Activated CD8-positive, alpha-beta T cell treated with anti-CD3 and anti-CD28 coated beads for 36 hours (primary cell): ENCODE measurements at regions of chr2 and their contacts with region 1.

Region 1: GRCh38 chr2:117470311-117471095 is 344.0 kb upstream of the DDX18 start:
- DNase-seq: peak; percentile 52
- ATAC-seq: no peak
- H3K4me3 Mint-ChIP-seq: no peak overlapping the region
- H3K27ac Mint-ChIP-seq: no peak overlapping the region
- H3K4me1 Mint-ChIP-seq: no peaks in the 10 kb centered on the region
- H3K27me3 Mint-ChIP-seq: no peaks in the 10 kb centered on the region
- CTCF ChIP-seq: peak; percentile 55

Region 2: GRCh38 chr2:117436697-117437096 is 33.8 kb before region 1 on chr2:
- CTCF ChIA-PET with region 1: no interaction called
- POLR2A ChIA-PET with region 1: no interaction called
- intact Hi-C with region 1: no loop called
- DNase-seq: no peak
- ATAC-seq: no peak
- H3K4me3 Mint-ChIP-seq: no peak overlapping the region
- H3K27ac Mint-ChIP-seq: no peak overlapping the region
- H3K4me1 Mint-ChIP-seq: no peaks in the 10 kb centered on the region
- H3K27me3 Mint-ChIP-seq: no peaks in the 10 kb centered on the region
- CTCF ChIP-seq: no peak

Region 3: GRCh38 chr2:117785740-117786139 is 315.2 kb after region 1 on chr2:
- CTCF ChIA-PET with region 1: interaction called, 3 read pairs
- POLR2A ChIA-PET with region 1: no interaction called
- intact Hi-C with region 1: loop called (anchors 5 kb)
- DNase-seq: peak; percentile 64
- ATAC-seq: peak; percentile 51
- H3K4me3 Mint-ChIP-seq: no peak overlapping the region
- H3K27ac Mint-ChIP-seq: no peak overlapping the region
- H3K4me1 Mint-ChIP-seq: no peaks in the 10 kb centered on the region
- H3K27me3 Mint-ChIP-seq: peaks cover 1% of the 10 kb centered on the region
- CTCF ChIP-seq: peak; percentile 84